Activated naive CD4-positive, alpha-beta T cell treated with anti-CD3 and anti-CD28 coated beads, Interleukin-2, amount 10 ng/mL, durations not matched to agents 7 days and 5 days (primary cell): ENCODE measurements at regions of chr15 and their contacts with region 1.

Region 1: GRCh38 chr15:38563723-38564519 is 693 bp downstream of the RASGRP1 start:
- DNase-seq: peak; percentile 90
- H3K4me3 Mint-ChIP-seq: peak overlapping the region; percentile 77
- H3K27ac Mint-ChIP-seq: peak overlapping the region; percentile 96
- H3K4me1 Mint-ChIP-seq: peaks cover 62% of the 10 kb centered on the region
- H3K27me3 Mint-ChIP-seq: no peaks in the 10 kb centered on the region

Region 2: DNA sequence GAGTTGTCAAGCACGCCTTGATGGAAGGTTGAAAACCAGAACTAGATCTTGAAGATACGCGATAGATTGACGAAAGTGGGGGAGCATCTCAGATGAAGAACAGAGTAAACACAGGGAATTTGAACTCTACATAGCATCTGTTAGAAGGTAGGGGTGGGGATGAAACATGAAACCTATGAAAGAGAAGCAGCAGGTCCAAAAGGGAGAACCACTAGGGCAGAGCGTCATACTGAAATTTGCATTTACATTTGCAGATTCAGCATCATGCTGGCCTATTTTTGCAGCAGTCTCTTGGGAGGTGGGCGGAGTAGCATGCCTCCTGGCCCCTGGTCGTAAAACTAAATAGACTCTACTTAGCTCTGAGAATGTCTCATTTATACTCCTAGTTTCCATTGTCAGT is 46.8 kb after region 1 on chr15:
- CTCF ChIA-PET with region 1: interaction called, 16 read pairs
- DNase-seq: peak; percentile 46
- H3K4me3 Mint-ChIP-seq: peak overlapping the region; percentile 58
- H3K27ac Mint-ChIP-seq: peak overlapping the region; percentile 97
- H3K4me1 Mint-ChIP-seq: peaks cover 56% of the 10 kb centered on the region
- H3K27me3 Mint-ChIP-seq: peaks cover 11% of the 10 kb centered on the region

Region 3: GRCh38 chr15:38662033-38662802 is 98.3 kb after region 1 on chr15:
- CTCF ChIA-PET with region 1: interaction called, 13 read pairs
- DNase-seq: no peak
- H3K4me3 Mint-ChIP-seq: no peak overlapping the region
- H3K27ac Mint-ChIP-seq: peak overlapping the region; percentile 26
- H3K4me1 Mint-ChIP-seq: peaks cover 84% of the 10 kb centered on the region
- H3K27me3 Mint-ChIP-seq: no peaks in the 10 kb centered on the region

Region 4: GRCh38 chr15:38683382-38684242 is 119.7 kb after region 1 on chr15:
- CTCF ChIA-PET with region 1: interaction called, 341 read pairs
- DNase-seq: peak; percentile 84
- H3K4me3 Mint-ChIP-seq: peak overlapping the region; percentile 35
- H3K27ac Mint-ChIP-seq: peak overlapping the region; percentile 98
- H3K4me1 Mint-ChIP-seq: peaks cover 79% of the 10 kb centered on the region
- H3K27me3 Mint-ChIP-seq: no peaks in the 10 kb centered on the region